Left cardiac atrium (tissue), 4 donors: ENCODE measurements at regions of chr12 and their contacts with region 1.

Region 1: DNA sequence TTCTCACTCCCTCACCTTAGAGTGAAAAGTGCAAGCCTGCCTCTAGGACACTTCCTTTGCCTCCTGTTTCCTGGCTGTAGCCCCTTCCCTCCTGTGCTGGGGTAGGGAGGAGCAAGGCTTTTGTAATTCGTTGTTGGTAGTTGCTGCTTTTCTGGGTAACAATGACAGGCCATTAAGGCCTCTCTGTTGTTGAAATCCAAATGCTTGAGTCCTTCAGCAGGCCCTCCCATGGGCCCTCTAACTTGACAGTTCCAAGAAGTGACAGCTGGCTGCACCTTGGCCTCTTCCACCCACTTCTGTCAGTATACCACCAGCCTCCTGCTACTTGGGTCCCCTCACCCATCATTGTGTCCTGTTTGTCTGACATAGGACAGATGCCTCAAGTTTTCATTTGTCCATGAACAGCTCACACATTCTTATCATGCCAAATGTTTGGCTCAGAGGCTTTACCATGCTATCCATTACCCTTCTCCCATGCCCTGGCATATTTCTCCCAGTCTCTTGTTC is 103.7 kb upstream of the PDE3A start:
- DNase-seq: no peak
- ATAC-seq: peak in 1 of 2 donors; percentile 69

Region 2: DNA sequence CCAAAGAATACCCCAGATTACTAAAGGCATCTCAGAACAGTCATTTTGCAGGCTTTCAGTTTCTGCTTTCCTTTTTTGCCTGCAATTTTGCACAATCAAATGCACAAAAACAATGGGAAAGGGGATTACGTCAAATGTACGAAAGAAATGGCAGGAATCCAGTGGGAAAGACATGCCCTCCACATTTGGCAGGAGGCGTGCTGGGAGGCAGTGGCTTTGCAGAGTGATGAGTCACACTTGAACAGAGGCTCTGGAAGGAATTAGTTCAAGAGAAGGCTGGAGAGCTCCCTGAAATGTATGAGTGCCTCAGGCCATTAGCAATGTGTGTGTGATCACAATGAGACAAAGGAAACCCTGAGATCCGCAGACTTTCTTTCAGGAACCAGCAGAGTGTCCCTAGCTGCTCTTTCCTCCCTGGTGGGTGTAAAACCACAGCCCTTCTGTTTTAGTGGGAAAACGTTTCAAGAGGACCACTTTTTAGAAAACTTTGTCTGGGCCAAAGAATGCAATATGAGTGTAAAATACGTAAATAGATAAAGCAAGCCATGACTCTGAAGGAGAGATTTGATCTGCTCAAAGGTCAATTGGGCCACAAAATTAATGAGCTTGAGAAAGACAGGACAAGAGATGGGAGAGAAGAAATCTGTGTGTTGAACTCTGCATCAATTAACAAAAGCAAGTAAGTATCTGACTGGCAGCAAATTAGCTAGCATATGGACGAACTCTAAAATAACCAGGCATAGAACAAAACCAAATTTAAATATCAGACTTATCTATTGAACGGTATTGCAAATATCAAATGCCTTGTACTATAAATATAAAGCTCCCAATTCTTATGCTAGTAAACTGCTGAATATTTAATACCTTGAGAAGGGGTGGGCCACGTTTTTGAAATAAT is 51.8 kb before region 1 on chr12:
- intact Hi-C with region 1: loop called in 1 of 2 experiments (anchors 10 kb)
- DNase-seq: peak; percentile 89
- ATAC-seq: peak; percentile 98 to 99

Region 3: DNA sequence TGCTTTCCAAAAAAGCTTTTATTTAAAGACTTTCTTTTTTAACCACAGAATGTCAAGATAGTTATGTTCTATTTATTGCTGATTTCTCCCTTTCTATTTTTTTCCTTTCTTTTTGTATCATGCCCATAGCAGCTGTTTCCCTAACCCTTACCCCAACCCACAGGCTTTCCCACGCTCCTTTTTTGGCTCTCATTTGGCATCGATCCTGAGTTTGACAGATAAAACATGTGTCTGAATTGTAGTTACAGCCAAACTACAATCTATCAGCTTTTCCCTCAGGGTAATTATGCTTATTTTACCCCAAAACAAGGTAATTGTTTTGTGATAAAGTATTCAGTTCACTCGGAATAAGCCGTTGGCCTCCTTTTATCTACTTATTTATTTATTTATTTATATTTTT is 150.4 kb after region 1 on chr12:
- intact Hi-C with region 1: no loop called
- DNase-seq: peak; percentile 29
- ATAC-seq: peak; percentile 75 to 78

Region 4: GRCh38 chr12:20463913-20464524 is 199.4 kb after region 1 on chr12:
- intact Hi-C with region 1: no loop called
- DNase-seq: no peak
- ATAC-seq: no peak